ENCODE measurements at regions of chr11 and their contacts with region 1.

Region 1: GRCh38 chr11:34492806-34493414 is 20.7 kb downstream of the ELF5 start:
- DNase-seq: peak; percentile 58
- ATAC-seq: no peak
- H3K4me3 Mint-ChIP-seq: no peak overlapping the region
- H3K27ac Mint-ChIP-seq: no peak overlapping the region
- H3K4me1 Mint-ChIP-seq: no peaks in the 10 kb centered on the region
- H3K27me3 Mint-ChIP-seq: peaks cover 4% of the 10 kb centered on the region

Region 2: GRCh38 chr11:34366522-34366921 is 126.4 kb before region 1 on chr11:
- CTCF ChIA-PET with region 1: interaction called, 13 read pairs
- POLR2A ChIA-PET with region 1: no interaction called
- DNase-seq: no peak
- ATAC-seq: no peak
- H3K4me3 Mint-ChIP-seq: no peak overlapping the region
- H3K27ac Mint-ChIP-seq: no peak overlapping the region
- H3K4me1 Mint-ChIP-seq: peaks cover 11% of the 10 kb centered on the region
- H3K27me3 Mint-ChIP-seq: peaks cover 28% of the 10 kb centered on the region

Region 3: DNA sequence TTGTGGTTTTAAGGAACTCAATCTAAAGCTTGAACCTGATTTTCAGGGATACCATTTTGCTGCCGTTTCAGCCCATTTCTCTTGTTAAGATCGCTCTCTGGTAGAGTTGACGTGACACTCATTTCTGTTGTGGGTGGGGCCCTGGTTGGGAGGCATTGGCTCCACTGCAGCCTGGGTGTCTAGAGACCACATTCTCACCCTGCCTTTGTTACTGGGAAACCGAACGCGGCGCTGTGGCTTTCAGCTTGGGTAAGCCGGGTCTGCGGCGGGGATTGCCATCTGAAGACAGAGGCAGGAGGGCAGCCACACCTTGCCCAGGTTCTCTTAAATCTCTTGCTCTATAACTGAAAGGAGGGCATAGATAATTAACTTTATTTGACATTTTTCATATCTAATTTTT is 131.2 kb after region 1 on chr11:
- CTCF ChIA-PET with region 1: no interaction called
- POLR2A ChIA-PET with region 1: no interaction called
- DNase-seq: no peak
- ATAC-seq: no peak
- H3K4me3 Mint-ChIP-seq: no peak overlapping the region
- H3K27ac Mint-ChIP-seq: no peak overlapping the region
- H3K4me1 Mint-ChIP-seq: no peaks in the 10 kb centered on the region
- H3K27me3 Mint-ChIP-seq: peaks cover 35% of the 10 kb centered on the region

Measured in activated CD8-positive, alpha-beta T cell treated with anti-CD3 and anti-CD28 coated beads, Interleukin-2, amount 10 ng/mL, durations not matched to agents 7 days and 5 days (primary cell).